Panc1 (cell line): ENCODE measurements at regions of chr3 and their contacts with region 1.

Region 1: DNA sequence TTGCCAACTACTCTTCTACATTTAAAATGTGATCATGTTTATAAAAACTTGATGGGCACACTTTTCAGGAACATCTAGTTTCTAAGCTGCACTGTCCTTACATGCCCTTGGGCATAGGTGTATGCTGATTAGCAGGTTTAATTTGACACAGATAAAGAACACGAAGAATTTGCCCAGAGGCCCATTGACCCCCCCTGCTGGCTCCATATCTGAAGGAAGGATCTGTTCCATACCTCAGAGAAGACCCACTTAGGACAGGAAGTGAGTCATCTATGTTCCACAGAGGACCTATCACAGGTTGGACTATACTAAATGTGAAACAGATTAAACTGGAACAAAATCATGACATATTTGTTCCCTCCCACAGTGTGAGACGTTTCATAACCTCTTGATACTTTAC is 92.8 kb upstream of the LPP start:
- DNase-seq: no peak
- ATAC-seq: peak; percentile 71; the same call in 1 of the 2 replicates
- H3K4me3 ChIP-seq: no peak overlapping the region
- H3K27ac ChIP-seq: no peak overlapping the region
- H3K4me1 ChIP-seq: no peaks in the 10 kb centered on the region
- H3K27me3 ChIP-seq: no peaks in the 10 kb centered on the region
- CTCF ChIP-seq: peak; percentile 23; the same call in 1 of the 2 replicates

Region 2: GRCh38 chr3:188111002-188111584 is 50.0 kb after region 1 on chr3:
- CTCF ChIA-PET with region 1: no interaction called
- POLR2A ChIA-PET with region 1: no interaction called
- in situ Hi-C with region 1: no loop called
- intact Hi-C with region 1: no loop called
- DNase-seq: no peak
- ATAC-seq: no peak
- H3K4me3 ChIP-seq: no peak overlapping the region
- H3K27ac ChIP-seq: no peak overlapping the region
- H3K4me1 ChIP-seq: no peaks in the 10 kb centered on the region
- H3K27me3 ChIP-seq: no peaks in the 10 kb centered on the region
- CTCF ChIP-seq: no peak

Region 3: GRCh38 chr3:188137051-188137450 is 75.9 kb after region 1 on chr3:
- CTCF ChIA-PET with region 1: no interaction called
- POLR2A ChIA-PET with region 1: no interaction called
- in situ Hi-C with region 1: no loop called
- intact Hi-C with region 1: no loop called
- DNase-seq: no peak
- ATAC-seq: no peak
- H3K4me3 ChIP-seq: no peak overlapping the region
- H3K27ac ChIP-seq: no peak overlapping the region
- H3K4me1 ChIP-seq: no peaks in the 10 kb centered on the region
- H3K27me3 ChIP-seq: no peaks in the 10 kb centered on the region
- CTCF ChIP-seq: no peak

Region 4: GRCh38 chr3:188207941-188208515 is 146.9 kb after region 1 on chr3:
- CTCF ChIA-PET with region 1: interaction called, 11 read pairs
- POLR2A ChIA-PET with region 1: no interaction called
- in situ Hi-C with region 1: no loop called
- intact Hi-C with region 1: no loop called
- DNase-seq: no peak
- ATAC-seq: no peak
- H3K4me3 ChIP-seq: no peak overlapping the region
- H3K27ac ChIP-seq: no peak overlapping the region
- H3K4me1 ChIP-seq: peaks cover 4% of the 10 kb centered on the region; the same call in 1 of the 2 replicates
- H3K27me3 ChIP-seq: no peaks in the 10 kb centered on the region
- CTCF ChIP-seq: no peak